ENCODE measurements at regions of chr1 and their contacts with region 1.

Region 1: DNA sequence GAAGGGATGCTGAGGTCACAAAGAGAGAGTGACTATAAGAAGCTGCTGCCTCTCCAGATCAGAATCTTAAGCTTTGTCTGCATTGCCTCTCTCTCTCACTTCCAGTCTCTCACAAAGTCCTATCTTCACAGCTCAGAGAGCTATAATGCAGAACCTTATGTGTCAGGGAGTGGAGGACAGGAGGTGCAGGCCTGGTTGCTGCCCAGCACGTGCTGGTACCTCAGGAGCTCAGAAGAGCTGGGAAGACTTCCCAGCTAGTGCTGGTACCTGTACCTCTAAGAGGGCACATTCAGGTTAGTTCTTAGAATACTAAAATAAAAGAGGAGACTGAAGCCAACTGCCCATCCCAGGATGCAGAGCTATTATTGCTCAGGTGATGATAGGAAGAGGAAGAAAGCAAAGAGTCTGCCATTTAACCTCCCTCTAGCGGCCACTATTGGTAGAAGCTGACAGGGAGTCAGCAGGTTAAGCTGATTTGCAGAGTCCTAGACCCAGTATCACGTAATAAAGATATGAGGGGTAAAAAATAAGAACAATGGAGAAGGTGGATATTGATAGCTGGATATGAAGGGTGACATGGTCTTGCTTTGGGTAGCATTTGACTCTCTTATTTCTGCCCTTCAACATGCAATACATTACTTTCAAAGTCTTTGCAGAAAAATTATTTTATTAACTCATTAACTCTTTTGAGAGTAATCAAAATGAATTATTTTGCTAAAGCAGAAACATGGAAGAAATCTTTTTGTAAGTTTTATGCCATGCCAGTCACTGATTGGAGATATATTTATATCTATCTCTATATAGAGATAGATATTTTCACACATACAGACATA is 138.1 kb upstream of the HMCN1 start:
- DNase-seq: peak; percentile 45
- H3K4me3 ChIP-seq: no peak overlapping the region
- H3K27ac ChIP-seq: no peak overlapping the region
- H3K4me1 ChIP-seq: no peaks in the 10 kb centered on the region
- H3K27me3 ChIP-seq: no peaks in the 10 kb centered on the region
- CTCF ChIP-seq: peak; percentile 50 to 55
- POLR2A ChIP-seq: no peak

Region 2: GRCh38 chr1:185426848-185427247 is 169.2 kb before region 1 on chr1:
- CTCF ChIA-PET with region 1: interaction called, 18 read pairs
- POLR2A ChIA-PET with region 1: no interaction called
- dilution Hi-C with region 1: no loop called
- intact Hi-C with region 1: loop called (anchors 2 kb)
- DNase-seq: peak; percentile 92
- H3K4me3 ChIP-seq: no peak overlapping the region
- H3K27ac ChIP-seq: peak overlapping the region; percentile 87
- H3K4me1 ChIP-seq: peaks cover 18% of the 10 kb centered on the region
- H3K27me3 ChIP-seq: no peaks in the 10 kb centered on the region
- CTCF ChIP-seq: no peak
- POLR2A ChIP-seq: no peak

Region 3: GRCh38 chr1:185581961-185582725 is 13.9 kb before region 1 on chr1:
- CTCF ChIA-PET with region 1: interaction called, 21 read pairs
- POLR2A ChIA-PET with region 1: no interaction called
- dilution Hi-C with region 1: no loop called
- intact Hi-C with region 1: no loop called
- DNase-seq: no peak
- H3K4me3 ChIP-seq: no peak overlapping the region
- H3K27ac ChIP-seq: no peak overlapping the region
- H3K4me1 ChIP-seq: no peaks in the 10 kb centered on the region
- H3K27me3 ChIP-seq: peaks cover 0 to 1% of the 10 kb centered on the region in 2 experiments
- CTCF ChIP-seq: no peak
- POLR2A ChIP-seq: no peak

Region 4: GRCh38 chr1:185646202-185646683 is 50.2 kb after region 1 on chr1:
- CTCF ChIA-PET with region 1: interaction called, 21 read pairs
- POLR2A ChIA-PET with region 1: no interaction called
- dilution Hi-C with region 1: no loop called
- intact Hi-C with region 1: no loop called
- DNase-seq: peak; percentile 99
- H3K4me3 ChIP-seq: peak overlapping the region in 1 of 3 experiments; percentile 27
- H3K27ac ChIP-seq: peak overlapping the region; percentile 72
- H3K4me1 ChIP-seq: peaks cover 23% of the 10 kb centered on the region
- H3K27me3 ChIP-seq: no peaks in the 10 kb centered on the region
- CTCF ChIP-seq: no peak
- POLR2A ChIP-seq: no peak

Region 5: DNA sequence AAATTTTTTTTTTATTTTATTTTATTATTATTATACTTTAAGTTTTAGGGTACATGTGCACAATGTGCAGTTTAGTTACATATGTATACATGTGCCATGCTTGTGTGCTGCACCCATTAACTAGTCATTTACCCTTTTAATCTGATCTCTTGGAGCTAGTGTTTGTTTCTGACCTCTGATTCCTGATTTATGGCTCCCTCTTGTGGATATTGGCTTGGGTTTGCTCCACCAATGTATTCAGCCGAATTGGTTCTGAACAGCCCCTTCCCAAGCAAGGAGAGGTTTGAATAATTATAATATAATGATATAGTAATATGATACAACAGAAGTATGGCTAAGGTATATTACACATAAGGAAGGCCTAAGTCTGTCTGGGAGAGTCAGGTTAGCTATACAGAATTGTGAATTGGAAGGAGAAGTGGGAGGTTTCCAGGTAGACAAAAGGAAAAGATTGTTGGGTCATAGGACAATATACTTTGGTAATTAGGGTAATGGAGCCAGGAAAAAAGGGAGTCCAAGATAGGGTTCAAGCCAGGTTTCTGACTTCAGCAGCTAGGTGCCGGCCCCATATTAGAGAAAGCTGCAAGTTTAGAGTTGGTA is 85.1 kb after region 1 on chr1:
- CTCF ChIA-PET with region 1: interaction called, 35 read pairs
- POLR2A ChIA-PET with region 1: no interaction called
- dilution Hi-C with region 1: no loop called
- intact Hi-C with region 1: no loop called
- DNase-seq: peak; percentile 64
- H3K4me3 ChIP-seq: no peak overlapping the region
- H3K27ac ChIP-seq: no peak overlapping the region
- H3K4me1 ChIP-seq: peaks cover 8% of the 10 kb centered on the region
- H3K27me3 ChIP-seq: no peaks in the 10 kb centered on the region
- CTCF ChIP-seq: peak; percentile 48 to 50
- POLR2A ChIP-seq: no peak

Region 6: GRCh38 chr1:185704181-185704580 is 108.1 kb after region 1 on chr1:
- CTCF ChIA-PET with region 1: no interaction called
- POLR2A ChIA-PET with region 1: no interaction called
- dilution Hi-C with region 1: no loop called
- intact Hi-C with region 1: no loop called
- DNase-seq: peak; percentile 70
- H3K4me3 ChIP-seq: no peak overlapping the region
- H3K27ac ChIP-seq: no peak overlapping the region
- H3K4me1 ChIP-seq: no peaks in the 10 kb centered on the region
- H3K27me3 ChIP-seq: no peaks in the 10 kb centered on the region
- CTCF ChIP-seq: no peak
- POLR2A ChIP-seq: no peak